ENCODE measurements at regions of chr5 and their contacts with region 1.

Region 1: GRCh38 chr5:56737002-56737621 is 78.2 kb upstream of the MAP3K1 start:
- DNase-seq: no peak
- H3K4me3 ChIP-seq: no peak overlapping the region
- H3K4me3 Mint-ChIP-seq: peak overlapping the region in 7 of 8 donors; percentile 49 to 85 (median 74)
- H3K27ac ChIP-seq: peak overlapping the region; percentile 45
- H3K27ac Mint-ChIP-seq: peak overlapping the region; percentile 73 to 97 (median 94)
- H3K4me1 ChIP-seq: peaks cover 55% of the 10 kb centered on the region
- H3K4me1 Mint-ChIP-seq: peaks cover 39 to 68% (median 56%) of the 10 kb centered on the region in 4 donors
- H3K27me3 ChIP-seq: no peaks in the 10 kb centered on the region
- H3K27me3 Mint-ChIP-seq: no peaks in the 10 kb centered on the region

Region 2: DNA sequence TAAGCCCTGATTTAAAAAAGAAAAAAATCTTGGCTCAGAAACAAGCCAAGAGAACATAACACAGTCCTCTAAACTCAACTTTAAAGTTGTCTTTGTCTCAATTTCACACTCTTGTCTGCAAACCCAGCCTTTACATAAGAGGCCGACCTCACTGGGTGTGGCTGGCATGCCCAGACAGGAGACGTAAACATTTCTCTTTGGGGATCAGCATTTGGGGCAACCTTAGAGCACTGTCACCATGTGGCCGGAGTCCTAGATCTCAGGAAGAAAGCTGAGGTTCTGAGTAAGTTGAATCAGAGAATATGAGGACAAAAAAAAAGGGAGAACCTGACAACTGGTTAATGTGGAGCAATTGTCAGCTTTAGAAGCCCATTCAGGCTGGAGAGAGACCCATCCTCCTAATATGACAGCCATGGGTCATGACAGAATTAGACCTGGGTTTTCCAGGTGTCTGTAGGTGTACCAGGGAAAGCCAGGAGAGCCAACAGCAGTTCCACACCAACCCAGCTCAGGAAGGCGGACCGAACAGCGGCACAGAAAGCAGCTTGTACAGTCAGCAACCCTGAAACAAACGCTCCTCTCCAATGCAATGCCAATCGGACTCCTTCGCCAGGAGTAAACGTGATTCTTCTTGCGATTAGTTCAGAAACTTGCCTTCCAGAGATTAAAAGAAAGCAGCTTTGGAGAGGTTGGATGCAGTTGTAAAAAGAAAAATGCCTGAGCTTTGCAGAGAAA is 19.7 kb before region 1 on chr5:
- CTCF ChIA-PET with region 1: interaction called, 4 read pairs
- POLR2A ChIA-PET with region 1: interaction called, 14 read pairs
- intact Hi-C with region 1: loop called (anchors 2 kb)
- DNase-seq: no peak
- H3K4me3 ChIP-seq: no peak overlapping the region
- H3K4me3 Mint-ChIP-seq: peak overlapping the region in 6 of 8 donors; percentile 19 to 63 (median 37)
- H3K27ac ChIP-seq: no peak overlapping the region
- H3K27ac Mint-ChIP-seq: peak overlapping the region in 5 of 7 donors; percentile 51 to 80 (median 55)
- H3K4me1 ChIP-seq: peaks cover 15% of the 10 kb centered on the region
- H3K4me1 Mint-ChIP-seq: peaks cover 11 to 34% (median 19%) of the 10 kb centered on the region in 4 donors
- H3K27me3 ChIP-seq: no peaks in the 10 kb centered on the region
- H3K27me3 Mint-ChIP-seq: peaks cover 0 to 2% of the 10 kb centered on the region in 2 donors

Region 3: GRCh38 chr5:56725711-56726411 is 11.3 kb before region 1 on chr5:
- CTCF ChIA-PET with region 1: no interaction called
- POLR2A ChIA-PET with region 1: interaction called, 11 read pairs
- intact Hi-C with region 1: no loop called
- DNase-seq: no peak
- H3K4me3 ChIP-seq: no peak overlapping the region
- H3K4me3 Mint-ChIP-seq: peak overlapping the region in 1 of 8 donors; percentile 31
- H3K27ac ChIP-seq: no peak overlapping the region
- H3K27ac Mint-ChIP-seq: no peak overlapping the region
- H3K4me1 ChIP-seq: no peaks in the 10 kb centered on the region
- H3K4me1 Mint-ChIP-seq: peaks cover 3 to 15% (median 5%) of the 10 kb centered on the region in 4 donors
- H3K27me3 ChIP-seq: no peaks in the 10 kb centered on the region
- H3K27me3 Mint-ChIP-seq: no peaks in the 10 kb centered on the region

Region 4: GRCh38 chr5:58706736-58707135 is 1969.6 kb after region 1 on chr5:
- CTCF ChIA-PET with region 1: no interaction called
- POLR2A ChIA-PET with region 1: no interaction called
- intact Hi-C with region 1: no loop called
- DNase-seq: no peak
- H3K4me3 ChIP-seq: no peak overlapping the region
- H3K4me3 Mint-ChIP-seq: no peak overlapping the region
- H3K27ac ChIP-seq: no peak overlapping the region
- H3K27ac Mint-ChIP-seq: no peak overlapping the region
- H3K4me1 ChIP-seq: no peaks in the 10 kb centered on the region
- H3K4me1 Mint-ChIP-seq: no peaks in the 10 kb centered on the region
- H3K27me3 ChIP-seq: no peaks in the 10 kb centered on the region
- H3K27me3 Mint-ChIP-seq: peaks cover 6% of the 10 kb centered on the region in 2 donors

Measured in CD4-positive, alpha-beta memory T cell (primary cell).